Lower lobe of right lung (tissue), 2 donors: ENCODE measurements at regions of chr5 and their contacts with region 1.

Region 1: DNA sequence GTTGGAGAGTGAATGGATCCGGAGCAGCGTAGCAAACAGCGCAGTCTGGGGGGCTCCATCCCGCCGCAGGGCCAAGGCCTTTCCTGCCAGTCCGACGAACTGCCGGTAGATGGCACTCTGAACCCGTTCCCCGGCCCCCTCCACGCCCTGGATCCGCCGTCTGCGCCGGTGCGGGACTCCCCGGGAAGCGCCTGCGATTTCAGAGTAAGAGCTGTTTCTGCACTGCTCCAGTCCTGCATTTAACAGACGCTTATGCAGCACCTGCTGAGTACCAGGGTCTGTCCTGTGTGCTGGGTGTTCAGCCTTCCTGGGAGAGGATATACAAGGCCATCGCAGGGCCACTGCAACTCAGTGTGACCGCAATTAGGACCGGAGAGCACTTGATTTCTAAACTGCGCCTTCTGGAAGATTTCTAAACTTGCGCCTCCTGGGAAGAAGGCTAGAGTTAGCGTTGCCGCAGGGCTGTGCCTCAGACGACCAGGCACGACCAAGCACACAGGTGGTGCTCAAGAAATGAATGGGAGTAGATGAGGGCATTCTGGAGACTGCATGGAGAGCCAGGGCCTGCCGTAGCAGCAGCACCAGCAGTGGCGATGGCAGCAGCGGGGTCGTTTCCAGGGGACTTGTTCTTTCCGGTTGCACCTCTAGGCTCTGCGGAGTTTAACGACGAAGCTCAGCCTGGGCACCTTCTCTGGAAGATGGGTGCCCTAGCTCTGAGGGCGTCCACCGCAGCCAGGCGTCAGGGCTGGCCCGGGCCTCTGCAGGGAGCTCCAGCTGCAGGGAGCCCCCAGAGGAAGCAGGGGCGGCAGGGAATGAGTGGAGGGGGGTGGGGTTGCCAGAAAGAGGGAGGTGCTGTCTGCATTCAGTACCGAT is 14.3 kb upstream of the TIFAB start:
- DNase-seq: peak; percentile 83
- ATAC-seq: peak; percentile 91 to 95
- H3K4me3 ChIP-seq: peak overlapping the region; percentile 17
- H3K27ac ChIP-seq: no peak overlapping the region
- H3K4me1 ChIP-seq: peaks cover 5% of the 10 kb centered on the region
- H3K27me3 ChIP-seq: peaks cover 47% of the 10 kb centered on the region
- CTCF ChIP-seq: peak; percentile 87

Region 2: GRCh38 chr5:135493406-135494180 is 27.2 kb after region 1 on chr5:
- intact Hi-C with region 1: no loop called
- DNase-seq: no peak
- ATAC-seq: no peak
- H3K4me3 ChIP-seq: no peak overlapping the region
- H3K27ac ChIP-seq: no peak overlapping the region
- H3K4me1 ChIP-seq: peaks cover 48% of the 10 kb centered on the region
- H3K27me3 ChIP-seq: peaks cover 44% of the 10 kb centered on the region
- CTCF ChIP-seq: no peak

Region 3: GRCh38 chr5:135551593-135552447 is 85.4 kb after region 1 on chr5:
- intact Hi-C with region 1: loop called (anchors 5 kb)
- DNase-seq: peak; percentile 65
- ATAC-seq: peak; percentile 83 to 85
- H3K4me3 ChIP-seq: no peak overlapping the region
- H3K27ac ChIP-seq: no peak overlapping the region
- H3K4me1 ChIP-seq: no peaks in the 10 kb centered on the region
- H3K27me3 ChIP-seq: peaks cover 56% of the 10 kb centered on the region
- CTCF ChIP-seq: peak; percentile 85